PC-9 (cell line): ENCODE measurements at regions of chr20 and their contacts with region 1.

Region 1: DNA sequence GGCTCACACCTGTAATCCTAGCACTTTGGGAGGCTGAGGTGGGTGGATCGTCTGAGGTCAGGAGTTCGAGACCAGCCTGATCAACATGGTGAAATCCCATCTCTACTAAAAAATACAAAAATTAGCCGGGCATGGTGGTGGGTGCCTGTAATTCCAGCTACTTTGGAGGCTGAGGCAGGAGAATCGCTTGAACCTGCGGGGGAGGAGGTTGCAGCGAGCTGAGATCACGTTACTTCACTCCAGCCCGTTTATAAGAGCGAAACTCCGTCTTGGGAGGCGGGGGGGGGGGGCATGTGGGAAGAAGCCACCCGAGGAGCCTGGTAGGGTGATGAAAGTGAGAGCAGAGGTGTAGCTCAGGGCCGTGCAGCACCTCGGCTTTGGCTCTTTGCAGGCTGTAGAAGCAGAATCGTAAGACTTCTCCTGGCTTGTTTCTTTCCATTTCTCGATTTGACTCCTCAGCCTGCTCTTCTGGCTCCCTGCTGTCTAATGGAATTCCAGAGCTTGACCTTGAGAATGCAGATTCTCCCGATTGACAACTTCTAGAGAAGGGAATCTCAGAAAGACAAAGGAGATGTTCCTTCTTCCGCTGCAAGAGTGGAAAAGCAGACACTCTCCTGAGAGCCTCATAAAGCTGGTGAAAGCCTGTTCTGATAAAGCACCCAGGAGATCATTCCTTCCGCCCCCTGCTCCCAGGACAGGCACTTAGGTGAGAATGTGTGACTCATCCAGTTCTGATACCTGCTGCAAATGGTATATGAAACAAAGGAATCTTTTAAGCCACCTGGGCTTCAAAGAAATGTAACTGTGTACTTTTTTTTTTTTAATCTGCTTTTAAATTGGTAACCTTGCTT is 26.0 kb upstream of the PPP1R16B start:
- DNase-seq: peak; percentile 62 to 79
- H3K4me3 ChIP-seq: no peak overlapping the region
- H3K27ac ChIP-seq: no peak overlapping the region
- H3K4me1 ChIP-seq: peaks cover 13% of the 10 kb centered on the region
- H3K27me3 ChIP-seq: no peaks in the 10 kb centered on the region
- CTCF ChIP-seq: no peak

Region 2: GRCh38 chr20:38870733-38871559 is 91.5 kb after region 1 on chr20:
- CTCF ChIA-PET with region 1: no interaction called
- POLR2A ChIA-PET with region 1: interaction called, 11 read pairs
- intact Hi-C with region 1: no loop called
- DNase-seq: peak; percentile 69 to 93
- H3K4me3 ChIP-seq: no peak overlapping the region
- H3K27ac ChIP-seq: peak overlapping the region; percentile 62
- H3K4me1 ChIP-seq: peaks cover 34% of the 10 kb centered on the region
- H3K27me3 ChIP-seq: no peaks in the 10 kb centered on the region
- CTCF ChIP-seq: no peak